ENCODE measurements at regions of chr12 and their contacts with region 1.

Region 1: GRCh38 chr12:79834712-79835376 is 100.1 kb downstream of the PPP1R12A start:
- DNase-seq: no peak
- ATAC-seq: no peak
- H3K4me3 ChIP-seq: no peak overlapping the region
- H3K4me3 Mint-ChIP-seq: no peak overlapping the region
- H3K27ac ChIP-seq: no peak overlapping the region
- H3K27ac Mint-ChIP-seq: no peak overlapping the region
- H3K4me1 ChIP-seq: peaks cover 12 to 14% of the 10 kb centered on the region in 2 experiments
- H3K4me1 Mint-ChIP-seq: peaks cover 65 to 69% (median 67%) of the 10 kb centered on the region in 3 donors
- H3K27me3 ChIP-seq: no peaks in the 10 kb centered on the region
- H3K27me3 Mint-ChIP-seq: no peaks in the 10 kb centered on the region

Region 2: GRCh38 chr12:79300166-79300501 is 534.7 kb before region 1 on chr12:
- CTCF ChIA-PET with region 1: no interaction called
- POLR2A ChIA-PET with region 1: no interaction called
- DNase-seq: no peak
- ATAC-seq: no peak
- H3K4me3 ChIP-seq: no peak overlapping the region
- H3K4me3 Mint-ChIP-seq: no peak overlapping the region
- H3K27ac ChIP-seq: no peak overlapping the region
- H3K27ac Mint-ChIP-seq: no peak overlapping the region
- H3K4me1 ChIP-seq: no peaks in the 10 kb centered on the region
- H3K4me1 Mint-ChIP-seq: no peaks in the 10 kb centered on the region
- H3K27me3 ChIP-seq: no peaks in the 10 kb centered on the region
- H3K27me3 Mint-ChIP-seq: no peaks in the 10 kb centered on the region

Region 3: DNA sequence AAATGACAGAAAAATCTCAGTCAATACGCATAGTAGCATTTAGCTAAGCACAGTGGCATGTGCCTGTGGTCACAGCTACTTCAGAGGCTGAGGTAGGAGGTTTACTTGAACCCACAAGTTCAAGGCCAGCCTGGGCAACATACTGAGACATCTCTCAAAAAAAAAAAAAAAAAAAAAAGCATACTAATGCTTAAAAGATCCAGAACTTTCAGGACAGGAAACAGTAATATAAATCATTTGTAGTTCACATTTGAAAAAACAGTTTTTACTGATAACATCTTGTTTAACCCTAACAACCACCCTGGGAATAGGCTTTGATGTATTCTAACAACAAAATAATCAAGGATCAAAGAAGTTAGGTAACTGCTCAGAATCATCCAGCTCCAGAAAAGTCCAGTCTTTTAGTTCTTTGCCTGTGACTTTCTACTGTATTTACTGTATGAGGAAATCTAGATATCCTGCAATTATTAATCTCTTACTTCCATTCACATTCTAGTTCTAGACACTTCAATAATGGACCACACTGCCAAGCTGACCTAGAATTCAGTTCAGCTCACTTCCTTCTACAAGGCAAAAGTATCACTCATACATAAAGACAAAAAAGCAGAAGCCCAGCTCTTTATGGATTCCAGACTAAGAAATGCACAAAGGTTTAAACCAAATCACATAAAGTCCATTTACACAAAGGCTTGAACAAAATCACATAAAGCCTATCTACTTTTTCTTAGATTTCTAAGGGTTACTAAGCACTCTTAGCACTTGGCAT is 172.6 kb before region 1 on chr12:
- CTCF ChIA-PET with region 1: no interaction called
- POLR2A ChIA-PET with region 1: interaction called in 1 of 2 experiments, 18 read pairs
- DNase-seq: no peak
- ATAC-seq: no peak
- H3K4me3 ChIP-seq: no peak overlapping the region
- H3K4me3 Mint-ChIP-seq: no peak overlapping the region
- H3K27ac ChIP-seq: no peak overlapping the region
- H3K27ac Mint-ChIP-seq: no peak overlapping the region
- H3K4me1 ChIP-seq: no peaks in the 10 kb centered on the region
- H3K4me1 Mint-ChIP-seq: peaks cover 0 to 6% (median 0%) of the 10 kb centered on the region in 3 donors
- H3K27me3 ChIP-seq: no peaks in the 10 kb centered on the region
- H3K27me3 Mint-ChIP-seq: no peaks in the 10 kb centered on the region

Region 4: GRCh38 chr12:79822475-79822874 is 12.4 kb before region 1 on chr12:
- CTCF ChIA-PET with region 1: interaction called in 1 of 2 experiments, 5 read pairs
- POLR2A ChIA-PET with region 1: interaction called in 1 of 2 experiments, 12 read pairs
- DNase-seq: no peak
- ATAC-seq: no peak
- H3K4me3 ChIP-seq: no peak overlapping the region
- H3K4me3 Mint-ChIP-seq: no peak overlapping the region
- H3K27ac ChIP-seq: no peak overlapping the region
- H3K27ac Mint-ChIP-seq: no peak overlapping the region
- H3K4me1 ChIP-seq: no peaks in the 10 kb centered on the region
- H3K4me1 Mint-ChIP-seq: peaks cover 15 to 29% (median 20%) of the 10 kb centered on the region in 3 donors
- H3K27me3 ChIP-seq: no peaks in the 10 kb centered on the region
- H3K27me3 Mint-ChIP-seq: no peaks in the 10 kb centered on the region

Region 5: DNA sequence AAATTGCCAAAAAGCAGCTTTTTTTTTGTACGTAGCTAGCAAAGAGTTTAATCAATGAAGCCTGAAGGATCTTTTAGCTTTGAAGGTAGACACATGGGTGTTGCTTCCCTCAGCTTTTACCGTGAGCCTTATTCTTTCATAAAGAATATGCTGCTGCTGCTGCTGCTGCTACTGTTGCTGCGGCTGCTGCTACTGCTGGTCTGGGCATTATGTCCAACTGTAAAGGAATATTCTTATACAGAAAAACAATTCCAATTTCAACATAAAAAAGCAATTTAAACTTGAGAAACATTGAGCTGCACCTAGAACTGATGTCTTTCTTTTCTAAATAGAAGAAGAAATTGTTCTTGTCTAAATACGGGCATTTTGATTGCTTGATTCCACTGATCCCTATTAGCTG is 139.0 kb after region 1 on chr12:
- CTCF ChIA-PET with region 1: no interaction called
- POLR2A ChIA-PET with region 1: no interaction called
- DNase-seq: no peak
- ATAC-seq: no peak
- H3K4me3 ChIP-seq: no peak overlapping the region
- H3K4me3 Mint-ChIP-seq: no peak overlapping the region
- H3K27ac ChIP-seq: no peak overlapping the region
- H3K27ac Mint-ChIP-seq: no peak overlapping the region
- H3K4me1 ChIP-seq: no peaks in the 10 kb centered on the region
- H3K4me1 Mint-ChIP-seq: no peaks in the 10 kb centered on the region
- H3K27me3 ChIP-seq: no peaks in the 10 kb centered on the region
- H3K27me3 Mint-ChIP-seq: peaks cover 2 to 7% of the 10 kb centered on the region in 2 donors

Measured in T-cell (primary cell).